Esophagus muscularis mucosa (tissue), 4 donors: ENCODE measurements at regions of chr19 and their contacts with region 1.

Region 1: DNA sequence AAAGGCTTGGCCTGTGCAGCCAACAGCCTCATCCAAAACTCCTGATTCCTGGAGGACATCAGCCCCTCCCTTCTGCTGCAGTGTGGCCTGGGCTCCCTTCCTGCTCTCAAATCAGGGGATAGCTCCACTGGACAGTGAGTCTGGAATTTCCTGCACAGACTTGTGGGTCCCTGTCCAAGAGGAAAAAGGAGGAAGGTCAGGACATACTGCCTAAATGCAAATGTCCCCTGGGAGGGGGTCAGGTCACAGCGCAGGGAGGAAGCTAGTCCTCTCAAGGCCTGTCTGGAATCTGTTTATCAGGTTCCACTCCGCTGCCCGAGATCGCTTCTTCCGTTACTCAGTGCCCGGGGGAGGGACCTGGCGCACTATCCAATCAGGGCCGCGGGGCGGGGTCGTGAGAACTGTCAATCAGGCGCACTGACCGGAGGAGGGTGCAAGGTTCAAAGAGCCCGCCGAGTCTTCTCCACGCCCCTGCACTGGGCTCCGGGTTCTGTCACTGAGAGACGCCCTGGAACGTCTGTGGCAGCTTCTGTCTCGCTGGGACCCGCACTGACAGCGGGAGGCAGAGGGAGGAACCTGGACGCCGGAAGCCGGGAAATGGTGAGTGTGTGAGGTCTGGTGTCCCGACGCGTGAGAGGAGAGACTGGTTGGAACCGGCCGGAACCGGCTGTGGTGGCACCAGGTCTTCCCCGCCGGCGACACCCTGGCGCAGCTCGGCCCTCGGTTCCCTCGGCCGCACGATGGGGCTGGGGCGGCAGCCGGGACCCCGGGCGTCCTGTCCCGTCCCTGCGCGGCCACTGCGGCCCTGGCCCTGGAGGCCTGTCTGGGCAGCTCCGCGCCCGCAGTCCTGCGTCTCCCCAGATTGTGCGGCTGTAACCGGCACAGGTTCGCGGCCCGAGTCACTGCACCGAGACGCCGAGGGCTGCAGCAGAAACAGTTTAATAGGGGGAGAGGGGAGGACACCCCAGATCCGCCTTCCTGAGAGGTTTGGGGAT is at the start of gene ZNF441:
- DNase-seq: peak; percentile 100
- H3K4me3 ChIP-seq: peak within 1 kb of the TSS; percentile 73 to 78 (median 74)
- H3K27ac ChIP-seq: peak within 1 kb of the TSS; percentile 89 to 96 (median 92)
- H3K4me1 ChIP-seq: peaks cover 18 to 24% (median 20%) of the 10 kb centered on the region in 4 donors
- H3K27me3 ChIP-seq: no peaks in the 10 kb centered on the region
- CTCF ChIP-seq: no peak
- EP300 ChIP-seq: no peak
- POLR2A ChIP-seq: peak; percentile 33
- total RNA-seq, gene ZNF441: 5.6 to 7.9 (median 6.5) TPM

Region 2: GRCh38 chr19:11597202-11598102 is 169.4 kb before region 1 on chr19 and contains the start of gene ZNF627:
- intact Hi-C with region 1: no loop called
- DNase-seq: peak; percentile 100
- H3K4me3 ChIP-seq: peak within 1 kb of the TSS; percentile 71 to 97 (median 90)
- H3K27ac ChIP-seq: peak within 1 kb of the TSS; percentile 86 to 93 (median 92)
- H3K4me1 ChIP-seq: peaks cover 10 to 42% (median 36%) of the 10 kb centered on the region in 4 donors
- H3K27me3 ChIP-seq: no peaks in the 10 kb centered on the region
- CTCF ChIP-seq: peak; percentile 18 to 50 (median 48)
- EP300 ChIP-seq: no peak
- POLR2A ChIP-seq: peak; percentile 76
- total RNA-seq, gene ZNF627: 7.8 to 10.2 (median 7.9) TPM

Region 3: DNA sequence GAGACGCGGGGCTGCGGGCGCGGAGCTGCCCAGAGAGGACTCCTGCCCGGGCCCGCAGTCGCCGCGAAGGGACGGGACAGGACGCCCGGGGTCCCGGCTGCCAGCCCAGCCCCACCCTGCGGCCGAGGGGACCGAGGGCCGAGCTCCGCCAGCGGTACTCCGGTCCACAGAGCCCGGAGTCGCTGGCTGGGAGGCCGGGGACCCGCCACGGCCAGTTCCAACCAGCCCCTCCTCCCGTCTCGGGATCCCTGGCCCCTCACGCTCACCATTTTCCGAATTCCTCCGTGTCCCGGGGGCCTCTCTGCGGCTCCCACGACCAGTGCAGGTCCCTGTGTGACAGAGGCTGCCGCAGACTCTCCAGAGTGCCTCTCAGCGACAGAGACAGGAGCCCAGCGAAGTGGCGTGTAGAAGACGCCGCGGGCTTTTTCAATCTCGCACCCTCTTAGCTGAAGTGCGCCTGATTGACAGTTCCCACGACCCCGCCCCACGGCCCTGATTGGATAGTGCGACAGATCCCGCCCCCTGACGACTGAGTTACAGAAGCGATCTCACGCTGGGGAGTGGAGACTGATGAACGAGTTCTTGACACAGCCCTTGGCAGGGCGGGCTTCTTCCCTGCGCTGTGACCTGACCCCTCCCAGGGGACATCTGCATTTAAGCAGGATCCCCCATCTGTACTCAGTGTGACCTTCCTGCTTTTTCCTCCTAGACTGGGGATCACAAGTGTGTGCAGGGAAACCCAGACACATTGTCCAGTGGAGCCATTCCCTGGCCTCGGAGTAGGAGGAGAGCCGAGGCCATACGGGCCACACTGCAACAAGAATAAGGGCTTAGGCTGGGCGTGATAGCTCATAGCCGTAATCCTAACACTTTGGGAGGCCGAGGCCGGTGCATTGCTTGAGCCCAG is 72.1 kb before region 1 on chr19:
- intact Hi-C with region 1: loop called (anchors 2 kb)
- DNase-seq: peak; percentile 99
- H3K4me3 ChIP-seq: peak overlapping the region; percentile 62 to 82 (median 72)
- H3K27ac ChIP-seq: peak overlapping the region; percentile 59 to 79 (median 71)
- H3K4me1 ChIP-seq: peaks cover 7 to 18% (median 15%) of the 10 kb centered on the region in 4 donors
- H3K27me3 ChIP-seq: no peaks in the 10 kb centered on the region
- CTCF ChIP-seq: no peak
- EP300 ChIP-seq: no peak
- POLR2A ChIP-seq: no peak